CD8-positive, alpha-beta T cell (primary cell): ENCODE measurements at regions of chr14 and their contacts with region 1.

Region 1: GRCh38 chr14:23186913-23187654 is 3.6 kb upstream of the SLC7A8 start:
- DNase-seq: peak in 3 of 9 experiments; percentile 14 to 66 (median 54)
- ATAC-seq: peak; percentile 54
- H3K4me3 ChIP-seq: no peak overlapping the region
- H3K4me3 Mint-ChIP-seq: no peak overlapping the region
- H3K27ac ChIP-seq: no peak overlapping the region
- H3K27ac Mint-ChIP-seq: no peak overlapping the region
- H3K4me1 ChIP-seq: peaks cover 8% of the 10 kb centered on the region
- H3K4me1 Mint-ChIP-seq: peaks cover 4% of the 10 kb centered on the region
- H3K27me3 ChIP-seq: no peaks in the 10 kb centered on the region
- H3K27me3 Mint-ChIP-seq: no peaks in the 10 kb centered on the region
- CTCF ChIP-seq: peak; percentile 57

Region 2: DNA sequence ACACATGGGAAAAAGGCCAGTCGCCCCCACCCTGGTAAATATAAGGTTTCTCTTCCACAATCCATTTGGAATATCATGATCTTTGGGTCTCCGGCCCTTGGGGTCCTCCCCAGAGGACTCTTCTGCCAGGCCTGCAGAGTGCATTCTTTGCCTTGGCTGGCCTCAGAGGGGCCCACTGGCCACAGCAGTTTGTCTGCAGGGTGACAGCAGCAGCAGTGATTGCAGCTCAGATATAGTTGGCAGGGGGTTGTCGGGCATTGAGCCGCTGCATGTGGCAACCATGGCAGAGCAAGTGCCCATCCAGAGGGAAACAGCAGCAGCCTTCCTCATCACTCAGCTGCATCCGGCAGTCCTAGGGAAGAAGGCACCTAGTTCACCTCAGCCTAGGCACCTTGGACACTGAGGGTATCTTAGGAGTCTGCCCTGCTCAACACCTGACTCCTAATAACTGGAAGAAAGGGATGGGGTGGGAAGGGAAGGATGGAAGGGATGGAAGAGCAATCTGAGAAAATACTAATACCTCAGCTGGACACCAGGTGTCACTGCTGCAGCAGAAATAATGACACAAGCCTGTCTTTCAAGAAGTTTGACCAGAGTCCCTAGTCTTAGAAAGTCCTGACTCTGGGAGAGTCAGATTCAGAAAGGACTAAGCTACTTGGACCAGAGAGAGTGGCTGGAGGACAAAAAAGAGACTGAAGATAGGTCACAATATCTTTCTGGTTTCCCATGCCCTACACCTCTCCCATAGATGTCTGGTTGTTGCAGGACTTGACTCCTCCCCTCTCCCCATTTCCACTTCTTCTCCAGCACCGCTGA is 213.7 kb before region 1 on chr14:
- CTCF ChIA-PET with region 1: no interaction called
- POLR2A ChIA-PET with region 1: no interaction called
- intact Hi-C with region 1: loop called in 1 of 2 experiments (anchors 10 kb)
- DNase-seq: peak in 7 of 9 experiments; percentile 30 to 70 (median 45)
- ATAC-seq: peak; percentile 52
- H3K4me3 ChIP-seq: no peak overlapping the region
- H3K4me3 Mint-ChIP-seq: no peak overlapping the region
- H3K27ac ChIP-seq: no peak overlapping the region
- H3K27ac Mint-ChIP-seq: no peak overlapping the region
- H3K4me1 ChIP-seq: no peaks in the 10 kb centered on the region
- H3K4me1 Mint-ChIP-seq: no peaks in the 10 kb centered on the region
- H3K27me3 ChIP-seq: no peaks in the 10 kb centered on the region
- H3K27me3 Mint-ChIP-seq: peaks cover 2% of the 10 kb centered on the region
- CTCF ChIP-seq: peak; percentile 64

Region 3: GRCh38 chr14:23076785-23077408 is 110.2 kb before region 1 on chr14:
- CTCF ChIA-PET with region 1: interaction called, 40 read pairs
- POLR2A ChIA-PET with region 1: no interaction called
- intact Hi-C with region 1: loop called in 1 of 2 experiments (anchors 1 kb)
- DNase-seq: peak in 3 of 9 experiments; percentile 43 to 66 (median 56)
- ATAC-seq: peak; percentile 89
- H3K4me3 ChIP-seq: no peak overlapping the region
- H3K4me3 Mint-ChIP-seq: no peak overlapping the region
- H3K27ac ChIP-seq: no peak overlapping the region
- H3K27ac Mint-ChIP-seq: no peak overlapping the region
- H3K4me1 ChIP-seq: peaks cover 2% of the 10 kb centered on the region
- H3K4me1 Mint-ChIP-seq: peaks cover 19% of the 10 kb centered on the region
- H3K27me3 ChIP-seq: no peaks in the 10 kb centered on the region
- H3K27me3 Mint-ChIP-seq: no peaks in the 10 kb centered on the region
- CTCF ChIP-seq: peak; percentile 85

Region 4: DNA sequence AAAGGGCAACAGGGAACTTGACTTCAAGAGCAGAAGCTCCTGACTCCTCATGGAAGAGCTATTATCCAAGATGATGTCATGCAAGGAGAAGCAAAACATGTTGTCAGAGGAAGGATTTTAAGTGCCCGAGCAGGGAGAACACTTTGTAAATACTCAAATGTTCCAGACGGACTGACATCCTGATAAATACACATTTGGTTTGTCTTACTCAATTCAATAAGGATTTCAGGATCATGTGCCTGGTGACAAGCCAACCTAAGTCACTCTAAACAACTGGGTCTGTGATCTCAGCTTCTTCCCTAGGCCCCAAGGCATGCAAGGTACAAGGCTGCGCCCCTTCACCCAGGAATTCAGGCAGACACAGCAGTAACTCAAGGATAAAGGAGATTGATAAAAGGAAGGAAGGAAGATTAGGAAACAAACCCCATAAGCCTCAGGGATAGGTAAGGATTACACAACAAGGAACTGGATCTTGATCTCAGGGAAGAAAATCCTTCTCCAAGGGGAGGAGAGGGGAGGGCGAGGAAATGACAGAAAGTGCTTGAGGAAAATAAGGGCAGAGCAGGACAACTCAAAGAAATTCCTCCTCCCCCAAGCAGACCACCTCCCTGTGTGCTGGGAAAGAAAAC is 41.2 kb before region 1 on chr14:
- CTCF ChIA-PET with region 1: interaction called, 10 read pairs
- POLR2A ChIA-PET with region 1: interaction called, 3 read pairs
- intact Hi-C with region 1: no loop called
- DNase-seq: no peak
- ATAC-seq: no peak
- H3K4me3 ChIP-seq: no peak overlapping the region
- H3K4me3 Mint-ChIP-seq: no peak overlapping the region
- H3K27ac ChIP-seq: no peak overlapping the region
- H3K27ac Mint-ChIP-seq: no peak overlapping the region
- H3K4me1 ChIP-seq: no peaks in the 10 kb centered on the region
- H3K4me1 Mint-ChIP-seq: no peaks in the 10 kb centered on the region
- H3K27me3 ChIP-seq: no peaks in the 10 kb centered on the region
- H3K27me3 Mint-ChIP-seq: peaks cover 18% of the 10 kb centered on the region
- CTCF ChIP-seq: no peak

Region 5: DNA sequence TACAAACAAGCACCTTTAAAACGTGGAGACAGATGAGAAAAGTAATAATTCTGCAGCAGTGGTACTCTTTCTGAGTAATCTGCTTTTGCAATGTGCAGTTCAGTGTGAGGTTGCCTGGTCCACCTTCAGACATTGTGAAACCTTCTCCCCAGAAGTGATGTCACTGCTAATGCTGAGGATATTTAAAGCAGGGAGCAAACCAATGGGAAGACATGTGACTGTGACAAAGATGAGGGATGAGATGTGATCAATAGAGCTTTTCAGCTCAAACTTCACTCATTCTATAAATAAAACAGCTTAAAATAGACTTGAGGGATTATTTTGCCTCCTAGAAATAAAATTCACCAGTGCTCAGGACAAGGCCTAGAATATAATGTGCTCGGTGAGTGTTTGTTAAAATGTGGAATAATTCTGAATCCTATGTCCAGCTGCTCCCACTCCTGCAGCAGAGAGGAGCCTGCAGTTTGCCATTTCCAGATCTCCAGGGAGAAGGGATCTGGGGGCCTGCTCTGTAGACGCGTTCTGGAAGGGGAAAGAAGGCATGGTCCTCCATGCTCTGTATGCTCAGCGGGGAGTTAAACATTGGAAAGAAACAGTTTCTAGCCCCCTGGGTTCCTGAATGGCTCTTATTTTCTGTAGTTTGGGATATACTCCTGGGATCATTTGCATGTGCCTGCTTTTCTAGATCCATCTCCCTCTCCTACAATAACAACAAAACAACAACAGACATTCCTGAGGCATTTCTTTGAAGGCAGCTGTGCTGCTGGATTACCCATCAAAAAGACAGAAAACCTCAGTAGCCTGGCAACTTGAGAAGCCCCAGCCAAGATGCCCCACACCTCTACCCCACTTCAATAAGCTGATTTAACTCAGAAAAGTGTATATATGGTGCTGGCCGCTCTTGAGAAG is 12.6 kb before region 1 on chr14:
- CTCF ChIA-PET with region 1: interaction called, 61 read pairs
- POLR2A ChIA-PET with region 1: no interaction called
- intact Hi-C with region 1: no loop called
- DNase-seq: no peak
- ATAC-seq: no peak
- H3K4me3 ChIP-seq: no peak overlapping the region
- H3K4me3 Mint-ChIP-seq: no peak overlapping the region
- H3K27ac ChIP-seq: no peak overlapping the region
- H3K27ac Mint-ChIP-seq: no peak overlapping the region
- H3K4me1 ChIP-seq: peaks cover 45% of the 10 kb centered on the region
- H3K4me1 Mint-ChIP-seq: peaks cover 60% of the 10 kb centered on the region
- H3K27me3 ChIP-seq: no peaks in the 10 kb centered on the region
- H3K27me3 Mint-ChIP-seq: peaks cover 4% of the 10 kb centered on the region
- CTCF ChIP-seq: no peak

Region 6: DNA sequence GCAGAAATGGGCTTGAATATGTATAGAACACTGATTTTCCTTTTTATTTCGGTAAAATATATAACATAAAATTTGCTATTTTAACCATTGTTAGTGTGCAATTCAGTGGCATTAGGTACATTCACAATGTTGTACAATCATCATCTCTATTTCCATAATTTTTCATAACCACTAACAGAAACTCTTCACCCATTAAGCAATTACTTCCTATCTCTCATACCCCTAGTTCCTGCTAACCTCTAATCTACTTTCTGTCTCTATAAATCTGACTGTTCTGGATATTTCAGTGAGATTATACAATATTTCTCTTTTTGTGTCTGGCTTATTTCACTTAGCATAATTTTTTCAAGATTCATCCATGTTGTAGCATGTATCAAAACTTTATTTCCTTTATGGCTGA is 41.7 kb after region 1 on chr14:
- CTCF ChIA-PET with region 1: no interaction called
- POLR2A ChIA-PET with region 1: no interaction called
- intact Hi-C with region 1: no loop called
- DNase-seq: no peak
- ATAC-seq: no peak
- H3K4me3 ChIP-seq: no peak overlapping the region
- H3K4me3 Mint-ChIP-seq: no peak overlapping the region
- H3K27ac ChIP-seq: no peak overlapping the region
- H3K27ac Mint-ChIP-seq: no peak overlapping the region
- H3K4me1 ChIP-seq: no peaks in the 10 kb centered on the region
- H3K4me1 Mint-ChIP-seq: no peaks in the 10 kb centered on the region
- H3K27me3 ChIP-seq: no peaks in the 10 kb centered on the region
- H3K27me3 Mint-ChIP-seq: peaks cover 2% of the 10 kb centered on the region
- CTCF ChIP-seq: no peak